Right cardiac atrium (tissue), 5 donors: ENCODE measurements at regions of chr11 and their contacts with region 1.

Region 1: GRCh38 chr11:67507864-67508485 is at the start of gene CDK2AP2:
- DNase-seq: peak; percentile 100
- ATAC-seq: peak; percentile 90 to 91
- H3K4me3 ChIP-seq: peak within 1 kb of the TSS; percentile 68
- H3K27ac ChIP-seq: peak within 1 kb of the TSS; percentile 96
- H3K4me1 ChIP-seq: peaks cover 10% of the 10 kb centered on the region
- H3K27me3 ChIP-seq: no peaks in the 10 kb centered on the region
- total RNA-seq, gene CDK2AP2: 31.5 to 52.7 (median 49.9) TPM

Region 2: GRCh38 chr11:67391304-67392132 is 116.5 kb before region 1 on chr11 and contains the start of gene RAD9A:
- intact Hi-C with region 1: loop called in 2 of 4 experiments (anchors 5 to 10 kb)
- DNase-seq: peak; percentile 96 to 99 (median 98)
- ATAC-seq: peak; percentile 88 to 90
- H3K4me3 ChIP-seq: peak within 1 kb of the TSS; percentile 73
- H3K27ac ChIP-seq: peak within 1 kb of the TSS; percentile 44
- H3K4me1 ChIP-seq: peaks cover 2% of the 10 kb centered on the region
- H3K27me3 ChIP-seq: no peaks in the 10 kb centered on the region
- total RNA-seq, gene RAD9A: 7.9 to 11.7 (median 9.4) TPM

Region 3: GRCh38 chr11:67401495-67402191 is 106.3 kb before region 1 on chr11 and contains the start of gene PPP1CA:
- intact Hi-C with region 1: loop called in 3 of 4 experiments (anchors 5 to 10 kb)
- DNase-seq: peak; percentile 92 to 97 (median 96)
- ATAC-seq: peak; percentile 80 to 87
- H3K4me3 ChIP-seq: peak within 1 kb of the TSS; percentile 80
- H3K27ac ChIP-seq: peak within 1 kb of the TSS; percentile 97
- H3K4me1 ChIP-seq: peaks cover 6% of the 10 kb centered on the region
- H3K27me3 ChIP-seq: no peaks in the 10 kb centered on the region
- total RNA-seq, gene PPP1CA: 73.1 to 93.4 (median 79.1) TPM